Activated B cell treated with CpG ODN at 0.5 μM for 24 hours (primary cell): ENCODE measurements at regions of chr1 and their contacts with region 1.

Region 1: GRCh38 chr1:89953072-89953626 is 41.8 kb upstream of the ZNF326 start:
- DNase-seq: no peak
- ATAC-seq: no peak
- H3K4me3 Mint-ChIP-seq: no peak overlapping the region
- H3K27ac Mint-ChIP-seq: no peak overlapping the region
- H3K4me1 Mint-ChIP-seq: peaks cover 9% of the 10 kb centered on the region
- H3K27me3 Mint-ChIP-seq: no peaks in the 10 kb centered on the region
- CTCF ChIP-seq: no peak

Region 2: DNA sequence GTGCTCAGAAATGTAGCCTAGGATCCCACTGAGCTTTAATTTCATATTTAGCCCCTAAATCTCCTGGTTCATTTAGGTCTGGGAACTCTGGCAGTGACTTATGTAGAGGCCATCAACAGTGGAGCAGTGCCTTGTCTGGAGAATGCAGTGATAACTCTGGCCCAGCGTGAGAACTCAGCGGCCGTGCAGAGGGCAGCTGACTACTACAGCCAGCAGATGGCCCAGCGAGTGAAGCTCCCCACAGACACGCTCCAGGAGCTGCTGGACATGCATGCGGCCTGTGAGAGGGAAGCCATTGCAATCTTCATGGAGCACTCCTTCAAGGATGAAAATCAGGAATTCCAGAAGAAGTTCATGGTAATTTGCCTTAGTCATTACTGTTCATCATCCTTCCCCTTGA is 571.5 kb before region 1 on chr1:
- CTCF ChIA-PET with region 1: no interaction called
- POLR2A ChIA-PET with region 1: no interaction called
- intact Hi-C with region 1: no loop called
- DNase-seq: no peak
- ATAC-seq: no peak
- H3K4me3 Mint-ChIP-seq: no peak overlapping the region
- H3K27ac Mint-ChIP-seq: no peak overlapping the region
- H3K4me1 Mint-ChIP-seq: no peaks in the 10 kb centered on the region
- H3K27me3 Mint-ChIP-seq: peaks cover 3% of the 10 kb centered on the region
- CTCF ChIP-seq: no peak

Region 3: DNA sequence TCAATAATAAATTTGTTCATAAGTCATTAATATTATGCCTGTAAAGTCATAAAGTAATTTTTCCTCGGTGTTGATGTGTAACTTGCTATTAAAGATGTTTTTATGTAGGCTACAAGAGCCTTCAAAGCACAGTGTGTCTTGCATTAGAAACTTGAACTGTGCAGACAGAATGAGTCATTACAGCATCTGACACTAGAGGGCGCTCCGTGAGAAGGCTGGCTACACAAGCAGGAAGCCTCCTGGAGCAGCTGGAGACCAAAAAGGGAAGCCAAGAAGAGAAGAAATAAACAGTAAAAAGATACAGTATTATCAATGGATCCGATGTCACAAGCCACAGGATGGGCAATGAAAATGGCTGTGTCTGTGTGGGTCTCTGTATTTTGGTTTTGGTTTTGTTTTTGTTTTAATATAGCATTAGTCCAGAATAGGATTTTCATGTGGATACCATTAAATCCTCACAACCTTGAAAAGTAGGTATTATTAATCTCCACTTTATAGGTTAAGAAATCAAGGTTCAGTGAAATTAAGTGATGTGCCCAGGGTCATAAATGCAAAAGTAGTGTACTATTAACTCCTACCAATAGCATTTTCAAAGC is 148.4 kb before region 1 on chr1:
- CTCF ChIA-PET with region 1: interaction called, 3 read pairs
- POLR2A ChIA-PET with region 1: no interaction called
- intact Hi-C with region 1: loop called (anchors 1 kb)
- DNase-seq: peak; percentile 59
- ATAC-seq: peak; percentile 94
- H3K4me3 Mint-ChIP-seq: no peak overlapping the region
- H3K27ac Mint-ChIP-seq: no peak overlapping the region
- H3K4me1 Mint-ChIP-seq: no peaks in the 10 kb centered on the region
- H3K27me3 Mint-ChIP-seq: no peaks in the 10 kb centered on the region
- CTCF ChIP-seq: peak; percentile 92